Calu3 (cell line): ENCODE measurements at regions of chr2 and their contacts with region 1.

Region 1: GRCh38 chr2:142877216-142877756 is at the start of gene KYNU:
- DNase-seq: peak; percentile 23
- H3K4me3 Mint-ChIP-seq: peak within 1 kb of the TSS; percentile 91
- H3K27ac Mint-ChIP-seq: peak within 1 kb of the TSS; percentile 74
- H3K4me1 Mint-ChIP-seq: peaks cover 66% of the 10 kb centered on the region
- H3K27me3 Mint-ChIP-seq: no peaks in the 10 kb centered on the region
- CTCF ChIP-seq: peak; percentile 35
- total RNA-seq, gene KYNU: 64.2 and 78.7 TPM in 2 replicates

Region 2: GRCh38 chr2:142682528-142682927 is 194.8 kb before region 1 on chr2:
- CTCF ChIA-PET with region 1: interaction called, 8 read pairs
- intact Hi-C with region 1: loop called (anchors 1 kb)
- DNase-seq: no peak
- H3K4me3 Mint-ChIP-seq: no peak overlapping the region
- H3K27ac Mint-ChIP-seq: peak overlapping the region; percentile 54
- H3K4me1 Mint-ChIP-seq: peaks cover 16% of the 10 kb centered on the region
- H3K27me3 Mint-ChIP-seq: no peaks in the 10 kb centered on the region
- CTCF ChIP-seq: no peak

Region 3: GRCh38 chr2:142716463-142717242 is 160.6 kb before region 1 on chr2:
- CTCF ChIA-PET with region 1: no interaction called
- intact Hi-C with region 1: no loop called
- DNase-seq: no peak
- H3K4me3 Mint-ChIP-seq: no peak overlapping the region
- H3K27ac Mint-ChIP-seq: no peak overlapping the region
- H3K4me1 Mint-ChIP-seq: no peaks in the 10 kb centered on the region
- H3K27me3 Mint-ChIP-seq: no peaks in the 10 kb centered on the region
- CTCF ChIP-seq: no peak

Region 4: GRCh38 chr2:142796161-142796560 is 81.1 kb before region 1 on chr2:
- CTCF ChIA-PET with region 1: interaction called, 3 read pairs
- intact Hi-C with region 1: loop called (anchors 1 kb)
- DNase-seq: no peak
- H3K4me3 Mint-ChIP-seq: no peak overlapping the region
- H3K27ac Mint-ChIP-seq: peak overlapping the region; percentile 37
- H3K4me1 Mint-ChIP-seq: peaks cover 21% of the 10 kb centered on the region
- H3K27me3 Mint-ChIP-seq: no peaks in the 10 kb centered on the region
- CTCF ChIP-seq: no peak

Region 5: DNA sequence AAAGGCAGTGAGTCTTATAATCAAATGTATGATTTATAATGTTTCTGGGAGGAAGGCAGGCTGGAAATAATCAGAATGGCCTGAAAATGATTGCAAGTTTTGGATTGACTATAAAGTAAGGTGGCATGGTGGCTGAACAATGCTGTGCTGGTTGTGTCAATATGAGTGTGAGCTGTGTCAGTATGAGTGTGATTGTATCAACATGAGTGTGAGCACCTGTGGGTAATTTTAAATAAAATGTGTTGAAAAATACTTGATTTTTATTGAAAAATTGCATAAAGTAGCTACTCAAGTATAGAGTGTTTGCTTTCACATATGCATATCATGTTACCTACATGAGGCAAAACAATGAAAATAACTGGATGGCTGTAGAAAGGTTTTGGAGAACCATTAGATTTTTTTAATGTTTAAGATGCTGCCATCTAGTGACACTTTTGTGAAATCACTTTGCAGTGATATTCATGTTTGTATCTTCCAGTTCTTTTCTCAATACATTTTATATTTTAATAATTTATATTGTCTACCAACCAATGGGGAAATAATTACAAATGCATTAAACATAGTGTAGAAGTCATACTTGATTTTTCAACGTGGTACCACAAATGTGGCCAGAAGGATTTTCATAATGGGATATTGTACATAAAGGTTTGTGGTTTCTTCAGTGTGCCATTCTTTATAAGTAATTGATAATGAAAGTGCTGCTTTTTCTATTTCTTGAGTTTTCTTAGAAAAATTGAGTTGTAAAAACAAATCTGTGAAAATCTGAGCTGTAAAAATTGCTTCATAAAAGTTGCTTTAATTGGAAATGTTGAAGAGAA is 103.5 kb after region 1 on chr2:
- CTCF ChIA-PET with region 1: interaction called, 6 read pairs
- intact Hi-C with region 1: loop called (anchors 2 kb)
- DNase-seq: no peak
- H3K4me3 Mint-ChIP-seq: peak overlapping the region; percentile 31
- H3K27ac Mint-ChIP-seq: peak overlapping the region; percentile 66
- H3K4me1 Mint-ChIP-seq: peaks cover 21% of the 10 kb centered on the region
- H3K27me3 Mint-ChIP-seq: no peaks in the 10 kb centered on the region
- CTCF ChIP-seq: peak; percentile 47

Region 6: GRCh38 chr2:142989273-142990204 is 112.3 kb after region 1 on chr2:
- CTCF ChIA-PET with region 1: interaction called, 3 read pairs
- intact Hi-C with region 1: loop called (anchors 2 kb)
- DNase-seq: no peak
- H3K4me3 Mint-ChIP-seq: no peak overlapping the region
- H3K27ac Mint-ChIP-seq: no peak overlapping the region
- H3K4me1 Mint-ChIP-seq: peaks cover 28% of the 10 kb centered on the region
- H3K27me3 Mint-ChIP-seq: no peaks in the 10 kb centered on the region
- CTCF ChIP-seq: peak; percentile 50